ENCODE measurements at regions of chr7 and their contacts with region 1.

Region 1: GRCh38 chr7:155205368-155206317 is 92.0 kb upstream of the INSIG1 start:
- DNase-seq: peak; percentile 97
- H3K4me3 ChIP-seq: peak overlapping the region; percentile 25 to 78 (median 51)
- H3K27ac ChIP-seq: peak overlapping the region; percentile 99
- H3K4me1 ChIP-seq: peaks cover 29% of the 10 kb centered on the region
- H3K27me3 ChIP-seq: no peaks in the 10 kb centered on the region
- CTCF ChIP-seq: no peak
- POLR2A ChIP-seq: peak; percentile 67

Region 2: GRCh38 chr7:155003376-155004214 is 202.0 kb before region 1 on chr7:
- CTCF ChIA-PET with region 1: no interaction called
- POLR2A ChIA-PET with region 1: interaction called, 3 read pairs
- dilution Hi-C with region 1: no loop called
- intact Hi-C with region 1: loop called (anchors 5 kb)
- DNase-seq: peak; percentile 71
- H3K4me3 ChIP-seq: peak overlapping the region; percentile 91 to 94 (median 92)
- H3K27ac ChIP-seq: peak overlapping the region; percentile 87
- H3K4me1 ChIP-seq: peaks cover 11% of the 10 kb centered on the region
- H3K27me3 ChIP-seq: no peaks in the 10 kb centered on the region
- CTCF ChIP-seq: no peak
- POLR2A ChIP-seq: peak; percentile 75

Region 3: GRCh38 chr7:155166673-155167370 is 38.8 kb before region 1 on chr7:
- CTCF ChIA-PET with region 1: no interaction called
- POLR2A ChIA-PET with region 1: no interaction called
- dilution Hi-C with region 1: no loop called
- intact Hi-C with region 1: loop called (anchors 1 kb)
- DNase-seq: peak; percentile 84
- H3K4me3 ChIP-seq: no peak overlapping the region
- H3K27ac ChIP-seq: no peak overlapping the region
- H3K4me1 ChIP-seq: no peaks in the 10 kb centered on the region
- H3K27me3 ChIP-seq: no peaks in the 10 kb centered on the region
- CTCF ChIP-seq: no peak
- POLR2A ChIP-seq: no peak

Region 4: GRCh38 chr7:155252444-155252887 is 46.8 kb after region 1 on chr7:
- CTCF ChIA-PET with region 1: interaction called, 4 read pairs
- POLR2A ChIA-PET with region 1: interaction called, 6 read pairs
- dilution Hi-C with region 1: no loop called
- intact Hi-C with region 1: loop called (anchors 1 kb)
- DNase-seq: peak; percentile 18
- H3K4me3 ChIP-seq: no peak overlapping the region
- H3K27ac ChIP-seq: no peak overlapping the region
- H3K4me1 ChIP-seq: peaks cover 7% of the 10 kb centered on the region
- H3K27me3 ChIP-seq: no peaks in the 10 kb centered on the region
- CTCF ChIP-seq: no peak
- POLR2A ChIP-seq: no peak

Region 5: GRCh38 chr7:155277690-155277994 is 72.0 kb after region 1 on chr7:
- CTCF ChIA-PET with region 1: no interaction called
- POLR2A ChIA-PET with region 1: no interaction called
- dilution Hi-C with region 1: no loop called
- intact Hi-C with region 1: loop called (anchors 1 kb)
- DNase-seq: peak; percentile 52
- H3K4me3 ChIP-seq: no peak overlapping the region
- H3K27ac ChIP-seq: no peak overlapping the region
- H3K4me1 ChIP-seq: peaks cover 23% of the 10 kb centered on the region
- H3K27me3 ChIP-seq: peaks cover 2 to 12% of the 10 kb centered on the region in 2 experiments
- CTCF ChIP-seq: no peak
- POLR2A ChIP-seq: no peak

Region 6: DNA sequence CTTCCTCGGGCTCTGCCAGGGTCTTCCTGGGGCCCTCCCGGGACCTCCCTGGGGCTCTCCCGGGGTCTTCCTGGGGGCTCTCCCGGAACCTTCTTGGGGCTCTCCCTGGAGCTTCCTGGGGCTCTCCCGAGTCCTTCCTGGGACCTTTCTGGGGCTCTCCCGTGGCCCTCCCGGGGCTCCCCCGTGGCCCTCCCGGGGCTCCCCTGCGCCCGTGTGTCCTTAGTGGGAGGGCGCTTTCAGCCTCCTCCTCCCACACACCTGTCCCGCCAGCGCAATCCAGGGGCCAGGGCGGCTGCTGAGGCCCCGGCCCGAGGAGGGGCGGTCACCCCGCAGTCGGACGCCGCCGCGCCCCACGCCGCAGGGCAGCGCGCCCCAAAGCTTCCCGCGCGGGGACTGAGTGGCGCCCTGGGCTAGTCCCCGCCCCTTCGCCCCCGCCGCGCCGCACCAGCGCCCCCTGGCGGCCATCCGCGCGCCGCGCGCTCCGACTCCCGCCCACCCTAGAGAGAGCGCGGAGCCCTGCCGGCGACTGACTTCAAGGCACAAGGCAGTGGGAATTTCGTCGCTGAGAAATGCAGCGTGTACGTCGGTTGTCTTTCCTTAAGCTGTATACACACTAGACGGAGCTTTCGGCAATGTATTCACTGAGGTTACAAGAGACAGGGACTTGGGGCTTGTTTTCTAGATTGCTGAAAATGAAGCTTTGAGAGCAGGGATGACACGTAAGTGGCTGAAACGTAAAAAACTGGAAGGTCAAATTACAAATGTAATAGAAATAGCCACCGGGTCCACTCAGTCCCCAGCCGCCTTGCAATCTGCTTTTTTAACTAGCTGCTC is 139.2 kb after region 1 on chr7:
- CTCF ChIA-PET with region 1: interaction called, 16 read pairs
- POLR2A ChIA-PET with region 1: no interaction called
- dilution Hi-C with region 1: no loop called
- intact Hi-C with region 1: no loop called
- DNase-seq: peak; percentile 70
- H3K4me3 ChIP-seq: peak overlapping the region in 1 of 3 experiments; percentile 14
- H3K27ac ChIP-seq: no peak overlapping the region
- H3K4me1 ChIP-seq: no peaks in the 10 kb centered on the region
- H3K27me3 ChIP-seq: peaks cover 2 to 3% of the 10 kb centered on the region in 2 experiments
- CTCF ChIP-seq: peak; percentile 79 to 82
- POLR2A ChIP-seq: no peak

Region 7: GRCh38 chr7:155490697-155491628 is 285.3 kb after region 1 on chr7:
- CTCF ChIA-PET with region 1: no interaction called
- POLR2A ChIA-PET with region 1: no interaction called
- dilution Hi-C with region 1: no loop called
- intact Hi-C with region 1: no loop called
- DNase-seq: no peak
- H3K4me3 ChIP-seq: no peak overlapping the region
- H3K27ac ChIP-seq: no peak overlapping the region
- H3K4me1 ChIP-seq: no peaks in the 10 kb centered on the region
- H3K27me3 ChIP-seq: peaks cover 6 to 12% of the 10 kb centered on the region in 2 experiments
- CTCF ChIP-seq: no peak
- POLR2A ChIP-seq: no peak

Region 8: GRCh38 chr7:155644178-155644970 is 438.7 kb after region 1 on chr7 and contains the start of gene RBM33:
- CTCF ChIA-PET with region 1: no interaction called
- POLR2A ChIA-PET with region 1: no interaction called
- dilution Hi-C with region 1: no loop called
- intact Hi-C with region 1: loop called (anchors 5 kb)
- DNase-seq: peak; percentile 87
- H3K4me3 ChIP-seq: peak within 1 kb of the TSS; percentile 83 to 100 (median 98)
- H3K27ac ChIP-seq: peak within 1 kb of the TSS; percentile 92
- H3K4me1 ChIP-seq: peaks cover 21% of the 10 kb centered on the region
- H3K27me3 ChIP-seq: no peaks in the 10 kb centered on the region
- CTCF ChIP-seq: no peak
- POLR2A ChIP-seq: peak; percentile 91
- total RNA-seq, gene RBM33: 62.9 and 68.2 TPM in 2 replicates

Measured in endothelial cell of umbilical vein (primary cell).